ENCODE measurements at regions of chr18 and their contacts with region 1.

Region 1: GRCh38 chr18:23703057-23703986 is 14.1 kb downstream of the LAMA3 start:
- DNase-seq: no peak
- ATAC-seq: peak; percentile 78
- H3K4me3 Mint-ChIP-seq: no peak overlapping the region
- H3K27ac Mint-ChIP-seq: no peak overlapping the region
- H3K4me1 Mint-ChIP-seq: no peaks in the 10 kb centered on the region
- H3K27me3 Mint-ChIP-seq: no peaks in the 10 kb centered on the region
- CTCF ChIP-seq: peak; percentile 19; the same call in 1 of the 2 replicates

Region 2: GRCh38 chr18:23515911-23516546 is 187.3 kb before region 1 on chr18:
- CTCF ChIA-PET with region 1: interaction called, 10 read pairs
- POLR2A ChIA-PET with region 1: no interaction called
- DNase-seq: peak; percentile 85
- ATAC-seq: peak; percentile 99
- H3K4me3 Mint-ChIP-seq: no peak overlapping the region
- H3K27ac Mint-ChIP-seq: no peak overlapping the region
- H3K4me1 Mint-ChIP-seq: no peaks in the 10 kb centered on the region
- H3K27me3 Mint-ChIP-seq: no peaks in the 10 kb centered on the region
- CTCF ChIP-seq: peak; percentile 71

Region 3: DNA sequence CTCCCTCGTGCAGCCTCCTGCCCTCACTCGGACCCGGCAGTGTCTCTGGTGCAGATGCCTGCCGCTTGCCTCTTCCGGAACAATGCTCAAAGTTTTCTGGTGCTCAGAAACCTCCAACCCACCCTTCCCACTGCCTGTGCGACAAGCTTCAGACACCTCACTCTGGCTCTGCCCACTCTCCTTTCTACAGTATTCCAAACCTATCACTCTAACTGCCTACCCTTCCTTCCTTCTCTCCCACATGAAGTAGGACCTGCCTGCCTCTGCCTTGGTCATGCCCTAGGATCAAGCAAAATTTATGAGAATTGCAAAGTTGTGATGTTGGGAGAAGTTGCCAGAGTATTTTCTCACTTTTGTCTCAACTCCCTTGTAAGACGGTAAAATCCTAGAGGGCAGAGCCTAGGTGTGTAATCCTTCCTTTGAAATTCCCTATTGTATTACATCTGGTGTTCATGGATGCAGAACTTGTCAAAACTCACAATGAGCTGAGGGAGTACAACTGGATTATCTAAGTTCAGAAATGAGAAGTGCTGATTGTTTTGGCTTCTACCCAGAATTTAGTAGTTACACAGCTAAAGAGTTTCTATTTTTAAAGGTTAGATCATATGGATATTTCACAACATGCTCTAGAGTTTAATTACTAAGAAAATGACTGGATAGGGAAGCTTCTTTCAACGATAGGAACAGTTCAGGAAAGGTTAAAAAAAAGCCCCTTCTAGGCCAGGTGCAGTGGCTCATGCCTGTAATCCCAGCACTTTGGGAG is 124.2 kb before region 1 on chr18:
- CTCF ChIA-PET with region 1: interaction called, 15 read pairs
- POLR2A ChIA-PET with region 1: no interaction called
- DNase-seq: no peak
- ATAC-seq: no peak
- H3K4me3 Mint-ChIP-seq: no peak overlapping the region
- H3K27ac Mint-ChIP-seq: peak overlapping the region; percentile 62; the same call in 1 of the 2 replicates
- H3K4me1 Mint-ChIP-seq: peaks cover 38% of the 10 kb centered on the region
- H3K27me3 Mint-ChIP-seq: no peaks in the 10 kb centered on the region
- CTCF ChIP-seq: no peak

Region 4: DNA sequence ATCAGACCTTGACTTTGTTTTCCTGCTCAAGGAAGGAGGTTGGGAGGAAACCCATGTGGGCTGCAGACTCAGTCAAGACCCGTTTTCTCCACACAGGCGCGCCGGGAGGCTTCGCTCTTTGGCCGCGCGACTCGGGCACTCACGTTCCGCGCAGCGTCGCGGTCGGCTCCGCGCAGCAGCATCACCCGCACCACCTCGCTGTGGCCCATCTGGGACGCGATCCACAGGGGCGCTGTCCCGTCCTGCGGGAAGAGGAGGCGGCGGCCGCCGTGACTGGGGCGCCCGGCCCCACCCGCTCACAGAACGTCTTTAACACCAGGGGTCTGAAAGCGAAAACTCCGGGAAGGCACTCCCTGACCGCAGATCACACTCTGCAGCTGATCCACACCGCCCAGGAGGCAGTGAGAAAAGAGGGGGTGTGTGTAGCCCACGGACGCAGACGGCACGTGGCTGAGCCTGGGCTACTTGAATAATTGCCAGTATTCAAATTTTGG is 83.9 kb before region 1 on chr18:
- CTCF ChIA-PET with region 1: interaction called, 66 read pairs
- POLR2A ChIA-PET with region 1: no interaction called
- DNase-seq: peak; percentile 49
- ATAC-seq: peak; percentile 54
- H3K4me3 Mint-ChIP-seq: peak overlapping the region; percentile 72
- H3K27ac Mint-ChIP-seq: no peak overlapping the region
- H3K4me1 Mint-ChIP-seq: peaks cover 11% of the 10 kb centered on the region
- H3K27me3 Mint-ChIP-seq: peaks cover 40% of the 10 kb centered on the region
- CTCF ChIP-seq: no peak

Region 5: GRCh38 chr18:23635283-23636070 is 67.8 kb before region 1 on chr18:
- CTCF ChIA-PET with region 1: interaction called, 15 read pairs
- POLR2A ChIA-PET with region 1: no interaction called
- DNase-seq: peak; percentile 27
- ATAC-seq: peak; percentile 75
- H3K4me3 Mint-ChIP-seq: no peak overlapping the region
- H3K27ac Mint-ChIP-seq: no peak overlapping the region
- H3K4me1 Mint-ChIP-seq: peaks cover 13% of the 10 kb centered on the region
- H3K27me3 Mint-ChIP-seq: no peaks in the 10 kb centered on the region
- CTCF ChIP-seq: no peak

Region 6: DNA sequence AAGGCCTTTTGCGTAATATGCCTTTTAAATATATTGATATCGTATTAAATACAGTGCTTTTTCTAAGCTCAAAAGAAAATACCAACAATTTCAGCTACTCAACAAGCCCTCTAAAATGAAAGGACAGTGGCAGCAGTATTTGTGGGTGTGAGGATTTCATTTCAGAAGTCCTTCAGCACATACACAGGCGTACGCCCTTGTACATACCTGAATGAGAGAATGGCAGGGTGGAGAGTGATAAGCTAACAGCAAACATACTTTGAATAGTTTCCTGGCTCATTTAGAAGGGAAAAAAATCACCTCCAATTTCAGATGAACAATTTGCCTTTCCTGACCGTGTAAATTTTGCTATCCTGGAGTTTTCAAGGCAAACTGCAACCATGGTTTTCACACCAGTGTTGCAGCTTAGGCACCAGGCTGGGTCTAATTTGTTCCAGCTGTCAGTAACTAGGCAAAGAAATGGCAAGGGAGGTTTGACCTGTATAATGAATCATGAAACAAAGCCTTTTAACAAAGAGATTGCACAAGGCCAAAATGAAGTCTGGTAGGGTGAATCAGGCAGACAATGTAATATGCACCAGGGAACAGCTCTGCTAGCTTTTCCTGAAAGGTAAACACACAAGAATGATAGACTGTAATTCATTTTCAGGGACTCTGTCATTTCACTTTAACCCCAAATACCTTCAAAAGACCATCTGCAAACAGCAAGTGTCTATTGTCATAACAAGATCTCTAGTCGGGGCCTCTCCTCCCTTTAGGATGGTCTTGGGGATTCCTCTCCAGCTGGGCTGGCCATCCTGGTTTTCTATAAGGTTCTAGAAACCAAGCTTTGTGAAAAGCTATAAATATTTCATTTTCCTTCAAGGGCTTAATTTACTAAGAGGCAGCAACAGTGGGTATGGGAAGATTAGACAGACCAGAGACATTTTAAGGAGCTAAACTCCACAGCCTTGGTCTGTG is 52.1 kb before region 1 on chr18:
- CTCF ChIA-PET with region 1: interaction called, 11 read pairs
- POLR2A ChIA-PET with region 1: no interaction called
- DNase-seq: no peak
- ATAC-seq: no peak
- H3K4me3 Mint-ChIP-seq: no peak overlapping the region
- H3K27ac Mint-ChIP-seq: no peak overlapping the region
- H3K4me1 Mint-ChIP-seq: peaks cover 12% of the 10 kb centered on the region
- H3K27me3 Mint-ChIP-seq: no peaks in the 10 kb centered on the region
- CTCF ChIP-seq: no peak

Region 7: GRCh38 chr18:23671564-23671963 is 31.8 kb before region 1 on chr18:
- CTCF ChIA-PET with region 1: no interaction called
- POLR2A ChIA-PET with region 1: no interaction called
- DNase-seq: no peak
- ATAC-seq: no peak
- H3K4me3 Mint-ChIP-seq: no peak overlapping the region
- H3K27ac Mint-ChIP-seq: no peak overlapping the region
- H3K4me1 Mint-ChIP-seq: peaks cover 25% of the 10 kb centered on the region
- H3K27me3 Mint-ChIP-seq: no peaks in the 10 kb centered on the region; the same call in 1 of the 2 replicates
- CTCF ChIP-seq: no peak

Measured in WTC11 (cell line).